Dendritic cell treated with granulocyte-macrophage colony-stimulating factor and Interleukin-4, amounts not matched to agents 40 ng/mL and 50 ng/mL, for 4 days (primary cell): ENCODE measurements at regions of chr7 and their contacts with region 1.

Region 1: GRCh38 chr7:54839538-54840213 is 80.7 kb upstream of the SEC61G start:
- H3K4me3 Mint-ChIP-seq: no peak overlapping the region
- H3K27ac Mint-ChIP-seq: no peak overlapping the region
- H3K4me1 Mint-ChIP-seq: peaks cover 5% of the 10 kb centered on the region
- H3K27me3 Mint-ChIP-seq: peaks cover 3% of the 10 kb centered on the region

Region 2: GRCh38 chr7:54712820-54713219 is 126.9 kb before region 1 on chr7:
- intact Hi-C with region 1: no loop called
- H3K4me3 Mint-ChIP-seq: no peak overlapping the region
- H3K27ac Mint-ChIP-seq: no peak overlapping the region
- H3K4me1 Mint-ChIP-seq: no peaks in the 10 kb centered on the region
- H3K27me3 Mint-ChIP-seq: no peaks in the 10 kb centered on the region

Region 3: DNA sequence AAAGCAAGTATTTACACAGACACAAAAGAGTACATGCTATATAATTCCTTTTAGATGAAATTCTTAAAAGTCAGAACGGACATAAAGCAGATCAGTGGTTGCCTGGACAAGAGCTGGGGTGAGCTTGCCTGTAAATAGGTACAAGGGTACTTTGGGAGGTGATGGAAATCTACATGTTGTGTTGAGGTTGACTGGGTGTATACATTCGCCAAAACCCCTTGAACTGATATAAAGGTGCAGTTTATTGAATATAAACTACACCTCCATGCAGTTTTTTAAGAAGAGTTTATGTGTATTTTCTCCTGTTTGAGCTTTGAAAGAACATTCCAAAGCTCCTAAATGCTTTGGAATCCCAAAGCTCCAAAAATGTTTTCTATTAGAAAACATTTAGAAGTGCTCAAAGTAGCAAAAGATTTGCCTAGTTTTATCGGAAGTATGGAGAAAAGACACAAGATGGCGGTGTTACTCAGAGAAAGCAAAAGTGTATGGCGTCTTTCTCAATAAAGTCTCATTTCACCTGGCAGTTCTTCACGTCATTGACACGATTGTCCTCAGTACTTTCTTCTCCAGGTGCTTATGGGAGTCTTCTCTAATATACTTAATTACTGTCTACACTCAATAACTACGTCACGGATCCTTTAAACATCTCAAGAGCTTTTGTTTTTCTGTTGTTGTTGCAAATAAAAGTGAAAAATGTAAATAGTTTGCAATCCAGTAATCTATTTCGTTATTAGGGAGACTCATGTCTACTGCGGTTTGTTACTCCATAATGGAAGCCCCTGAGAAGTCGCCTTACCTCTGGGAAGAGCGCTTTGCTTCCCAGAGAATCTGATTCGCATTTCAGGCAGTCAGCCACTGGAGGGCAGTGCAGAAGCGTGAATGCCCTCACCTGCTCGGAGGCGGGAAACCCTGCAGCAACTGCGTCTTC is 65.9 kb before region 1 on chr7:
- intact Hi-C with region 1: loop called (anchors 1 kb)
- H3K4me3 Mint-ChIP-seq: peak overlapping the region; percentile 51
- H3K27ac Mint-ChIP-seq: no peak overlapping the region
- H3K4me1 Mint-ChIP-seq: peaks cover 8% of the 10 kb centered on the region
- H3K27me3 Mint-ChIP-seq: peaks cover 23% of the 10 kb centered on the region

Region 4: DNA sequence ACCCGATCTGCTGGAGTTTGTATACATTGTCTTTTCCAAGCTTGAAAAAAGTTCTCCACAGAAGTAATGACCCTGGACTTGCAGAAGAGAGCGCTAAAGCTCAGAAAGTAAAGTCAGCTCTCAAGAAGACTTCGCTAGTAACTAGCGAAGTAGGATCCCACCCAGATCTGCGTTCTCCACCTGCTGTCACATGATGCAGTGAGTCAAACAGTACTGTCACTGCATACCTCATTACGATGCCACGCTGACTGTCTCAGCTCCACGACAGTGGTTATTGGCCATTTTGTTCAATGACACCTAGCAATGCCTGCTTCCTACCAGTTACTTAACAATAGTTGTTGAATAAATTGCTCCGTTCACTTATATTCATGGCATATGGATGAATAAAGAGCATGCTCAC is 51.0 kb before region 1 on chr7:
- intact Hi-C with region 1: loop called (anchors 1 kb)
- H3K4me3 Mint-ChIP-seq: no peak overlapping the region
- H3K27ac Mint-ChIP-seq: no peak overlapping the region
- H3K4me1 Mint-ChIP-seq: no peaks in the 10 kb centered on the region
- H3K27me3 Mint-ChIP-seq: peaks cover 28% of the 10 kb centered on the region